CD4-positive, alpha-beta memory T cell (primary cell): ENCODE measurements at regions of chr10 and their contacts with region 1.

Region 1: DNA sequence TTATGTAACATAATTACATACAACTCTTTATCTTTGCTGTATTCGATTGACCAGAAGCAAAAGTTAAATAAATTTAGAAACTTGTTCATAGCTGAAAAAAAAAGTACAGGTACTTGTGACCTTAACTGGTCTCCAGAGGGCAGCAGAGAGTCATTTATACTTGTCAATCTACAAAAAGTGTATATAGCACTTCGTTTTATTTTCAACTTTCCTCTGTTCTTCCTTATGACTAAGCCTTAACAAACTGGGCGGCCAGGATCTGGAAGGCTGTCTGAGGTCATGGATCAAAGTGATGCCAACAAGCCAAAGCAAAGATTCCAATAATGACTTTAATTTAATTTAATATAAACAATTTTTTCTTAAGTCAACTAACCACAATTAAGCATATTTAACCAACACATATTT is 29.8 kb downstream of the C10orf67 start:
- DNase-seq: peak; percentile 55 to 68 (median 63)
- H3K4me3 ChIP-seq: no peak overlapping the region
- H3K4me3 Mint-ChIP-seq: no peak overlapping the region
- H3K27ac ChIP-seq: no peak overlapping the region
- H3K27ac Mint-ChIP-seq: no peak overlapping the region
- H3K4me1 ChIP-seq: no peaks in the 10 kb centered on the region
- H3K4me1 Mint-ChIP-seq: no peaks in the 10 kb centered on the region
- H3K27me3 ChIP-seq: no peaks in the 10 kb centered on the region
- H3K27me3 Mint-ChIP-seq: peaks cover under 1 to 3% of the 10 kb centered on the region in 2 donors

Region 2: GRCh38 chr10:23325132-23325531 is 10.3 kb after region 1 on chr10:
- CTCF ChIA-PET with region 1: interaction called, 40 read pairs
- POLR2A ChIA-PET with region 1: no interaction called
- intact Hi-C with region 1: no loop called
- DNase-seq: no peak
- H3K4me3 ChIP-seq: no peak overlapping the region
- H3K4me3 Mint-ChIP-seq: no peak overlapping the region
- H3K27ac ChIP-seq: no peak overlapping the region
- H3K27ac Mint-ChIP-seq: peak overlapping the region in 1 of 7 donors; percentile 41
- H3K4me1 ChIP-seq: no peaks in the 10 kb centered on the region
- H3K4me1 Mint-ChIP-seq: peaks cover 0 to 2% (median 0%) of the 10 kb centered on the region in 4 donors
- H3K27me3 ChIP-seq: no peaks in the 10 kb centered on the region
- H3K27me3 Mint-ChIP-seq: peaks cover 9 to 11% of the 10 kb centered on the region in 2 donors

Region 3: DNA sequence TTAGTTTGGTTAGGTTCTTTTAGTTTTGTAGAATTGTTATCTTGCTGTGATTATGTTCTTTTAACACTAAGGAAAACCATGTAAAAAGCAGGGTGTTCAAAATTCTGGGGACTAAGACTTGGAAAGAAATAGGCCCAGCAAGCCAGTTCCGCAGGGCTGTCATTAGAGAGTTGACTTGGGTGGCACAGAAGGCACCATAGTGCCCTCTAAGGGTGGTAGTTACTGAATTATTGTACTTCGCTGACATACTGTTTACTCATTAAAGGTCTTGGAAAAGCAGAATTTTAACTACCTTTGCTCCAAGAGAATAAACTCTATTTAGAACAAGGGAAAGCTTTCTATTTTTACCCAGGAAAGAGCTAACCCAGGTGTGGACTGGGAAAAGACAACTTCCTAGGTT is 210.6 kb after region 1 on chr10:
- CTCF ChIA-PET with region 1: interaction called, 261 read pairs
- POLR2A ChIA-PET with region 1: no interaction called
- intact Hi-C with region 1: loop called (anchors 1 kb)
- DNase-seq: peak in 4 of 5 donors; percentile 8 to 23 (median 14)
- H3K4me3 ChIP-seq: no peak overlapping the region
- H3K4me3 Mint-ChIP-seq: no peak overlapping the region
- H3K27ac ChIP-seq: no peak overlapping the region
- H3K27ac Mint-ChIP-seq: peak overlapping the region in 1 of 7 donors; percentile 5
- H3K4me1 ChIP-seq: no peaks in the 10 kb centered on the region
- H3K4me1 Mint-ChIP-seq: no peaks in the 10 kb centered on the region
- H3K27me3 ChIP-seq: no peaks in the 10 kb centered on the region
- H3K27me3 Mint-ChIP-seq: peaks cover 0 to 4% of the 10 kb centered on the region in 2 donors

Region 4: GRCh38 chr10:23656735-23657134 is 341.9 kb after region 1 on chr10:
- CTCF ChIA-PET with region 1: interaction called, 5 read pairs
- POLR2A ChIA-PET with region 1: no interaction called
- intact Hi-C with region 1: loop called (anchors 1 kb)
- DNase-seq: no peak
- H3K4me3 ChIP-seq: no peak overlapping the region
- H3K4me3 Mint-ChIP-seq: no peak overlapping the region
- H3K27ac ChIP-seq: no peak overlapping the region
- H3K27ac Mint-ChIP-seq: no peak overlapping the region
- H3K4me1 ChIP-seq: no peaks in the 10 kb centered on the region
- H3K4me1 Mint-ChIP-seq: no peaks in the 10 kb centered on the region
- H3K27me3 ChIP-seq: no peaks in the 10 kb centered on the region
- H3K27me3 Mint-ChIP-seq: peaks cover 4 to 9% of the 10 kb centered on the region in 2 donors

Region 5: DNA sequence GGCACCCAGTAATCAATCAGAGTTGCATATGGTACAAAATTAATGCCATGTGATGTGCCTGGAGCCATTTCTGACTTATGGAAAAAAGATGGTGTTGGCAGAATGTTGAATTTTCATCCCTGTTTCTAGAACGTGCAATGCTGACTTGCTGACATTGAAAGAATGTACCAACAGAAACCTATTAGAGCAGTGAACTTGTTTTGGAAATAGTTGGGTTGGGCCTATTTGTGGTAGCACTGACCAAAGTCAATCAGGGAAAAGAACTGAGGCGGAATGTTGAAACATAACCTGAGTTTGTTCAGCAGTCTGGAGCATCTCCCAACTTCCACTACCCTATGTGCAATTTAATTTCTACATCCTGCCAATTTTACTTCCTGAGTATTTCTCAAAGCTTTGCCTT is 882.4 kb after region 1 on chr10:
- CTCF ChIA-PET with region 1: interaction called, 34 read pairs
- POLR2A ChIA-PET with region 1: no interaction called
- intact Hi-C with region 1: no loop called
- DNase-seq: no peak
- H3K4me3 ChIP-seq: no peak overlapping the region
- H3K4me3 Mint-ChIP-seq: no peak overlapping the region
- H3K27ac ChIP-seq: no peak overlapping the region
- H3K27ac Mint-ChIP-seq: no peak overlapping the region
- H3K4me1 ChIP-seq: no peaks in the 10 kb centered on the region
- H3K4me1 Mint-ChIP-seq: no peaks in the 10 kb centered on the region
- H3K27me3 ChIP-seq: no peaks in the 10 kb centered on the region
- H3K27me3 Mint-ChIP-seq: no peaks in the 10 kb centered on the region